HepG2 (cell line): ENCODE measurements at regions of chrX and their contacts with region 1.

Region 1: DNA sequence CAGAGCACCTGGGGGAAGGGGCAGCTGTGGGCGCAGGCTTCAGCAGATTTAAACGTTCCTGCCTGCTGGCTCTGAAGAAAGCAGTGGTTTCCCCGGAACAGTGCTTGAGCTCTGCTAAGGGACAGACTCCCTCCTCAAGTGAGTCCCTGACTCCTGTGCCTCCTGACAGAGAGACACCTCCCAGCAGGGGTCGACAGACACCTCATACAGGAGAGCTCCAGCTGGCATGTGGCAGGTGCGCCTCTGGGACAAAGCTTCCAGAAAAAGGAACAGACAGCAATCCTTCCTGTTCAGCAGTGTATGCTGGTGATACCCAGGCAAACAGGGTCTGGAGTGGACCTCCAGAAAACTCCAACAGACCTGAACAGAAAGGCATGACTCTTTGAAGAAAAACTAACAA is 68.1 kb downstream of the ZC4H2 start:
- DNase-seq: no peak
- ATAC-seq: no peak
- H3K4me3 ChIP-seq: no peak overlapping the region
- H3K27ac ChIP-seq: no peak overlapping the region
- H3K4me1 ChIP-seq: no peaks in the 10 kb centered on the region
- H3K27me3 ChIP-seq: no peaks in the 10 kb centered on the region
- CTCF ChIP-seq: peak; percentile 44; the same call in 1 of the 2 replicates
- EP300 ChIP-seq: no peak
- POLR2A ChIP-seq: no peak
- RAD21 ChIP-seq: no peak

Region 2: GRCh38 chrX:64975989-64976672 is 68.0 kb after region 1 on chrX and contains the start of gene ZC4H2:
- CTCF ChIA-PET with region 1: no interaction called
- POLR2A ChIA-PET with region 1: no interaction called
- in situ Hi-C with region 1: no loop called
- intact Hi-C with region 1: loop called (anchors 1 kb)
- DNase-seq: peak; percentile 73
- ATAC-seq: peak; percentile 100
- H3K4me3 ChIP-seq: peak within 1 kb of the TSS; percentile 54 to 80 (median 78)
- H3K27ac ChIP-seq: peak within 1 kb of the TSS; percentile 38
- H3K4me1 ChIP-seq: peaks cover 11% of the 10 kb centered on the region
- H3K27me3 ChIP-seq: no peaks in the 10 kb centered on the region
- CTCF ChIP-seq: no peak
- EP300 ChIP-seq: no peak
- POLR2A ChIP-seq: no peak; a peak in 1 of 4 replicates
- RAD21 ChIP-seq: no peak
- total RNA-seq, gene ZC4H2: 6.1 and 9.3 TPM in 2 replicates